ENCODE measurements at regions of chr4 and their contacts with region 1.

Region 1: GRCh38 chr4:1346781-1347409 is at the start of gene UVSSA:
- DNase-seq: peak; percentile 100
- ATAC-seq: peak; percentile 87
- H3K4me3 ChIP-seq: peak within 1 kb of the TSS; percentile 77
- H3K4me3 Mint-ChIP-seq: peak within 1 kb of the TSS; percentile 96
- H3K27ac ChIP-seq: peak within 1 kb of the TSS; percentile 84 to 89
- H3K27ac Mint-ChIP-seq: peak within 1 kb of the TSS; percentile 96
- H3K4me1 ChIP-seq: peaks cover 40% of the 10 kb centered on the region
- H3K4me1 Mint-ChIP-seq: peaks cover 60% of the 10 kb centered on the region
- H3K27me3 ChIP-seq: no peaks in the 10 kb centered on the region
- H3K27me3 Mint-ChIP-seq: no peaks in the 10 kb centered on the region
- CTCF ChIP-seq: no peak
- total RNA-seq, gene UVSSA: 31.1 to 33.1 TPM

Region 2: DNA sequence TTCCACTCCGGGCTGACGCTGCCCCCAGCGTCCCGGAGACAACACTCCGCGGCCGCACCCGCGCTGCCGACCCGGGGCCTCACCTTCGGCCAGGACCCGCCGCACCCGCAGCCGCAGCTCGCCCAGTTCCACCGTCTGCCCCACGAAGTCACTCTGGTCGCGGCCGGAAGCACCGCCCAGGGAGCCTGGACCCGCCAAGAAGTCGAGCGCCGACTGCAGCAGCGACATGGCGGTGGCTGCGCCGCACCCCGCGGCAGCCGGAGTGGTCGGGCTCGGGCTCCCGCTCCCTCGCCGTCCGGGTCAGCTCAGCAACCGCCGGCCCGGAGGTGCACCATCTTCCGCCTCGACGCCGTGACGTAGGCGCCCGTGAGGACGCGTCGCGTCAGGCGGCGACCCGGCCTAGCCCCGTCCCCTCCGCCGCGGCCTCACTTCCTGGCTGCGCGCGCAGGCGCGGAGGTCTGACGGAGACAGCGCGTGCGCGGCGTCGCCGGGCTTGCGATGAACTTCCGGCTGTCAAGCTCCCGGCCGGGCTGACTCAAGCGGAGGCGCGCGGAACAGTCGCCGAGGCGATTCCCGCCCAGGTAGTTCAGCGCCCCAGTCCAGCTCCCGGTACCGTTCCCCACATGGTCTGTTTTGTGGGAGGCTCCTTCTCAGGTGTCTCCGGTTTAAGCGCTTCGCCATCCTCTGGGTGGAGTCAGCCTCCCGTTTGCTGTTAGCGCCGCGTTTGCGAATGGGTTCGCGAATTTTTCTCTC is 414.8 kb before region 1 on chr4 and contains the starts of genes GAK and TMEM175:
- CTCF ChIA-PET with region 1: no interaction called
- POLR2A ChIA-PET with region 1: no interaction called
- intact Hi-C with region 1: loop called in 1 of 2 experiments (anchors 5 kb)
- DNase-seq: peak; percentile 91 to 99 (median 96)
- ATAC-seq: peak; percentile 90
- H3K4me3 ChIP-seq: peak within 1 kb of the TSS; percentile 97
- H3K4me3 Mint-ChIP-seq: peak within 1 kb of the TSS; percentile 98
- H3K27ac ChIP-seq: peak within 1 kb of the TSS; percentile 75 to 89
- H3K27ac Mint-ChIP-seq: peak within 1 kb of the TSS; percentile 98
- H3K4me1 ChIP-seq: peaks cover 43% of the 10 kb centered on the region
- H3K4me1 Mint-ChIP-seq: peaks cover 42% of the 10 kb centered on the region
- H3K27me3 ChIP-seq: no peaks in the 10 kb centered on the region
- H3K27me3 Mint-ChIP-seq: no peaks in the 10 kb centered on the region
- CTCF ChIP-seq: no peak
- total RNA-seq, gene GAK: 130 to 131 TPM
- total RNA-seq, gene TMEM175: 51.3 to 57.7 TPM

Region 3: GRCh38 chr4:1167247-1167949 is 179.5 kb before region 1 on chr4:
- CTCF ChIA-PET with region 1: interaction called, 9 read pairs
- POLR2A ChIA-PET with region 1: interaction called, 7 read pairs
- intact Hi-C with region 1: loop called (anchors 1 kb)
- DNase-seq: peak; percentile 69 to 96 (median 84)
- ATAC-seq: peak; percentile 87
- H3K4me3 ChIP-seq: peak overlapping the region; percentile 79
- H3K4me3 Mint-ChIP-seq: peak overlapping the region; percentile 90
- H3K27ac ChIP-seq: no peak overlapping the region
- H3K27ac Mint-ChIP-seq: peak overlapping the region; percentile 67
- H3K4me1 ChIP-seq: peaks cover 40% of the 10 kb centered on the region
- H3K4me1 Mint-ChIP-seq: peaks cover 25% of the 10 kb centered on the region
- H3K27me3 ChIP-seq: peaks cover 19 to 21% of the 10 kb centered on the region in 2 experiments
- H3K27me3 Mint-ChIP-seq: peaks cover 16% of the 10 kb centered on the region
- CTCF ChIP-seq: peak; percentile 97

Region 4: DNA sequence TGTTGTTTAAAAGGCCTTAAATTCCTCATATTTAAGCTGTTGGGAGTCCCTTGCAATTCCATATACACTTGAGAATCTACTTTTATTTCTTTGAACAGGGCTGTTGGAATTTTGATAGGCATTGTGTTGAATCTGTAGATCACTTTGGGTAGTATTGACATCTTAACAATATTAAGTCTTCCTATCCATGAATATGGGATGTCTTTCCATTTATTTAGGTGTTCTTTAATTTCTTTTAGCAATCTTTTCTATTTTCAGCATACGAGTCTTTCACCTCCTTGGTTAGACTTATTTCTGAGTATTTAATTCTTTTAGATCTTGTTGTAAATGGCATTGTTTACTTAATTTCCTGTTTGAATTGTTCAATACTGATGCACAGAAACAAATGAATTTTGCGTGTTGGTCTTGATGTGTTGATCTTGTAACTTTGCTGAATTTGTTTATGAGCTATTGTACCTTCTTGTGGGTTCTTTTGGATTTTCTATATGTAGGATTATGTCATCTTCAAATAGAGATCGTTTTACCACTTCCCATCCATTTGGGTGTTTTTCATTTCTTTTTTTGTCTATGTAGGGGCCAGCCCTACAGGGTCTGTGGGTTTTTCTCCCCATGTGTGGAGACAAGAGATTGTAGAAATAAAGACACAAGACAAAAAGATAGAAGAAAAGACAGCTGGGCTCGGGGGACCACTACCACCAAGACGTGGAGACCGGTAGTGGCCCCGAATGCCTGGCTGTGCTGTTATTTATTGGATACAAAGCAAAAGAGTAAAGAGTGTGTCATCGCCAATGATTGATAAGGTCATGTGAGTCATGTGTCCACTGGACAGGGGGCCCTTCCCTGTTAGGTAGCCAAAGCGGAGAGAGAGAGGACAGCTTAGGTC is 79.8 kb before region 1 on chr4:
- CTCF ChIA-PET with region 1: interaction called, 19 read pairs
- POLR2A ChIA-PET with region 1: interaction called, 7 read pairs
- intact Hi-C with region 1: loop called in 1 of 2 experiments (anchors 5 kb)
- DNase-seq: peak in 3 of 14 experiments; percentile 23 to 40 (median 32)
- ATAC-seq: peak; percentile 81
- H3K4me3 ChIP-seq: peak overlapping the region; percentile 51
- H3K4me3 Mint-ChIP-seq: peak overlapping the region; percentile 78
- H3K27ac ChIP-seq: peak overlapping the region; percentile 38 to 58
- H3K27ac Mint-ChIP-seq: peak overlapping the region; percentile 94
- H3K4me1 ChIP-seq: peaks cover 4% of the 10 kb centered on the region
- H3K4me1 Mint-ChIP-seq: peaks cover 14% of the 10 kb centered on the region
- H3K27me3 ChIP-seq: no peaks in the 10 kb centered on the region
- H3K27me3 Mint-ChIP-seq: no peaks in the 10 kb centered on the region
- CTCF ChIP-seq: no peak

Region 5: DNA sequence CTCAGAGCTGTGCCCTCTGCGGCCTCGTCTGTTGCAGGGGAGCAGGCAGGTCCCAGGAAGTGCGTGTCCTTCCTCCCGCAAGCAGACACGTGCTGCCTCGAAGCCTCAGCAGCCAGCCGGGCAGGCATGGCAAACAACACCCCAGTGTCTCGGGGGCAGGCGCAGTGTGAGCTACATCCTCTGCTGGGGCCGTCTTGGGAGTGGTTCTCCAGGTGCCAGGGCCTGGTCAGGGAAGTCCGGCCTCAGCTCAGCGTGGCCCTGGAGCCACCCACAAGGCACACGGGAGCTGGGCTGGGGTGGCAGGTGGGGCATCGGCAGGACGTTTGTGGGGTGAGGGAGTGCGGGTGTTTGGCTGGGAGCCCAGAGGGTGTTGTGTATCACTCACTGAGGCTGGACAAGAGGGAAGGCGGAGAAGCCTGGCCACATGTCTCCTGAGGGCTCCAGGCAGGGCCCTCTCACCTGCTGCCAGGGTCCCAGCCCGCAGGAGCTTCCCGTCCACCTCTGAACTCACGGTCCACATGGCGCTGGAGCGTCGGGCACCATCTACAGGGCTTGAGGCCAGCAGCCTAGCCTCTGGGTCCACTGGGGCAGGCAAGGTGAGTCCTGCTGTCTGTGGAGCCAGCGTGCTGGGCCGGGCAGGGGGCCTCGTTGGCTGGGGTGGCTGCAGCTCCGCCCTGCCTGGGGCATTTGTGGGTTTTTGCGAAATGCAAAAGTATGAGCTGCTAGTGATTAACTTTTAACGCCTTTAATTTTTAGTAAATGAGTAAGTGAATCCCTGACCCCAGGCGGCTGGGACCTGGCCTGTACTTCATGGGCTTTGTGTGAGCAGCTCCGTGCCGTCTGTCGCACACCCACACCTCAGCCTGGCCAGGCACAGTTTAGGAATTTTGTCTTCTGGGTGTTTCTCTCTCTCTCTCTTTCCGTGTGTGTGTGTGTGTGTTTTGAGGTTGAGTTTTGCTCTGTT is 17.2 kb before region 1 on chr4:
- CTCF ChIA-PET with region 1: interaction called, 15 read pairs
- POLR2A ChIA-PET with region 1: interaction called, 48 read pairs
- intact Hi-C with region 1: loop called (anchors 2 kb)
- DNase-seq: peak in 10 of 14 experiments; percentile 15 to 84 (median 56)
- ATAC-seq: peak; percentile 63
- H3K4me3 ChIP-seq: no peak overlapping the region
- H3K4me3 Mint-ChIP-seq: peak overlapping the region; percentile 83
- H3K27ac ChIP-seq: peak overlapping the region; percentile 41 to 47
- H3K27ac Mint-ChIP-seq: peak overlapping the region; percentile 91
- H3K4me1 ChIP-seq: peaks cover 79% of the 10 kb centered on the region
- H3K4me1 Mint-ChIP-seq: peaks cover 32% of the 10 kb centered on the region
- H3K27me3 ChIP-seq: no peaks in the 10 kb centered on the region
- H3K27me3 Mint-ChIP-seq: no peaks in the 10 kb centered on the region
- CTCF ChIP-seq: no peak

Region 6: GRCh38 chr4:1712216-1713002 is 365.5 kb after region 1 on chr4 and contains the start of gene SLBP:
- CTCF ChIA-PET with region 1: no interaction called
- POLR2A ChIA-PET with region 1: no interaction called
- intact Hi-C with region 1: loop called in 1 of 2 experiments (anchors 5 kb)
- DNase-seq: peak; percentile 98 to 99 (median 99)
- ATAC-seq: peak; percentile 86
- H3K4me3 ChIP-seq: peak within 1 kb of the TSS; percentile 95
- H3K4me3 Mint-ChIP-seq: peak within 1 kb of the TSS; percentile 89
- H3K27ac ChIP-seq: peak within 1 kb of the TSS; percentile 79 to 91
- H3K27ac Mint-ChIP-seq: peak within 1 kb of the TSS; percentile 93
- H3K4me1 ChIP-seq: peaks cover 60% of the 10 kb centered on the region
- H3K4me1 Mint-ChIP-seq: peaks cover 49% of the 10 kb centered on the region
- H3K27me3 ChIP-seq: no peaks in the 10 kb centered on the region
- H3K27me3 Mint-ChIP-seq: no peaks in the 10 kb centered on the region
- CTCF ChIP-seq: no peak
- total RNA-seq, gene SLBP: 45.8 to 47.6 TPM